CD8-positive, alpha-beta memory T cell (primary cell): ENCODE measurements at regions of chr1 and their contacts with region 1.

Region 1: GRCh38 chr1:42721926-42722325 is 18.1 kb downstream of the CLDN19 start:
- DNase-seq: no peak
- H3K4me3 ChIP-seq: no peak overlapping the region
- H3K4me3 Mint-ChIP-seq: no peak overlapping the region
- H3K27ac ChIP-seq: no peak overlapping the region
- H3K27ac Mint-ChIP-seq: no peak overlapping the region
- H3K4me1 ChIP-seq: no peaks in the 10 kb centered on the region
- H3K4me1 Mint-ChIP-seq: no peaks in the 10 kb centered on the region
- H3K27me3 ChIP-seq: no peaks in the 10 kb centered on the region
- H3K27me3 Mint-ChIP-seq: no peaks in the 10 kb centered on the region

Region 2: GRCh38 chr1:41650028-41650880 is 1071.7 kb before region 1 on chr1:
- CTCF ChIA-PET with region 1: no interaction called
- POLR2A ChIA-PET with region 1: interaction called, 10 read pairs
- DNase-seq: peak in 1 of 5 donors; percentile 16
- H3K4me3 ChIP-seq: no peak overlapping the region
- H3K4me3 Mint-ChIP-seq: peak overlapping the region in 3 of 7 donors; percentile 17 to 68 (median 48)
- H3K27ac ChIP-seq: no peak overlapping the region
- H3K27ac Mint-ChIP-seq: peak overlapping the region in 5 of 8 donors; percentile 12 to 78 (median 45)
- H3K4me1 ChIP-seq: peaks cover 13% of the 10 kb centered on the region
- H3K4me1 Mint-ChIP-seq: peaks cover 22 to 41% (median 33%) of the 10 kb centered on the region in 3 donors
- H3K27me3 ChIP-seq: no peaks in the 10 kb centered on the region
- H3K27me3 Mint-ChIP-seq: no peaks in the 10 kb centered on the region

Region 3: DNA sequence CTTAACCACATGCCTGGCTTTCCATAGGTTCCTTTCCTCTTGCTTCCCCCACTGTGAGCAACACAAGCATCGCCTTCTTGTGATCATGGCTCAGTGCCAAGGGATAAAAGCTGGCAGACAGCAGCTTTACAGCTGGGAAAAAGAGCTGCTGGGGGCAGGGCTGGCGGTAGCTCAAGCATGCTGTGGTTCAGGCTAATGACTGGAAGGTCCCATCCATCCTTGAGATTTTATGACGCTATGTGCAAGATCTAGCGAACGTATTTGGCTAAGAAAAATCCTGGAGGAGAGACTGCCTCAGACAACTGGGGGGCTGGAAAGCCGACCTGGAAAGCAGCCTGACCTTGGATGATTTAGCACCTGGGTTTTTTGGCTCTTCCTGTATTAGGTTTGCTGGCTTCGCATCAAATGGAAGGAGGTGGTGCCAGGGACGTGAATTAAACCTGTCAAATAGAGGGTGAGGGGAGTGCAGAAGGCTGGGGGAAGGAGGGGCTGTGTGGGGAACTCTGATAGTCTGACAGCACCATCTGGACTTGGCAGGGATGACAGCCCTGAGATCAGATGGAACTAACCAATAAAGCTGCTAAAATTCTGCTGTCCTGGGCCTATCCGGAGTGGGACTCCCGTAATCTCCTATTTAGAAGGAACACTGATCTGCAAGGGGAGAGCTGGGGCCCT is 300.9 kb before region 1 on chr1:
- CTCF ChIA-PET with region 1: no interaction called
- POLR2A ChIA-PET with region 1: no interaction called
- DNase-seq: no peak
- H3K4me3 ChIP-seq: no peak overlapping the region
- H3K4me3 Mint-ChIP-seq: no peak overlapping the region
- H3K27ac ChIP-seq: no peak overlapping the region
- H3K27ac Mint-ChIP-seq: peak overlapping the region in 1 of 8 donors; percentile 96
- H3K4me1 ChIP-seq: no peaks in the 10 kb centered on the region
- H3K4me1 Mint-ChIP-seq: no peaks in the 10 kb centered on the region
- H3K27me3 ChIP-seq: no peaks in the 10 kb centered on the region
- H3K27me3 Mint-ChIP-seq: peaks cover 10 to 37% of the 10 kb centered on the region in 2 donors

Region 4: GRCh38 chr1:42618866-42619265 is 103.1 kb before region 1 on chr1:
- CTCF ChIA-PET with region 1: no interaction called
- POLR2A ChIA-PET with region 1: no interaction called
- DNase-seq: no peak
- H3K4me3 ChIP-seq: no peak overlapping the region
- H3K4me3 Mint-ChIP-seq: no peak overlapping the region
- H3K27ac ChIP-seq: no peak overlapping the region
- H3K27ac Mint-ChIP-seq: no peak overlapping the region
- H3K4me1 ChIP-seq: no peaks in the 10 kb centered on the region
- H3K4me1 Mint-ChIP-seq: no peaks in the 10 kb centered on the region
- H3K27me3 ChIP-seq: no peaks in the 10 kb centered on the region
- H3K27me3 Mint-ChIP-seq: no peaks in the 10 kb centered on the region

Region 5: DNA sequence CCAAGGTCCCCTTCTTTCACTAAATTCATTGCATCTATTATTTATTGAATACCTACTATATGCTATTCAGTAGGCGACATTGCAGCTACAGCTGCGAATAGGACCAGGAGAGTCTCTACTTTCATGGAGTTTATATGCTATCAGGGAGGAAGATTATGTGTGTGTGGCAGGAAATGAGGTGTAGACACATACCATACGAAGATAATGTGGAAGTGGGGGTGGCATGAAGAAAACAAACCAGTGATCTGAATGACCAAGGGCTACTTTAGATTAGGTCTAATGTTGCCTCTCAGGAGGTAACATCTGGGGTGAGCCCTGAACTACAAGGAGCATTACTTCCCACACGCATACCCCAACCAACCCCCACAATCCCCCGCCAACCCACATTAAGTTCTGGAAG is 64.7 kb before region 1 on chr1:
- CTCF ChIA-PET with region 1: no interaction called
- POLR2A ChIA-PET with region 1: no interaction called
- DNase-seq: no peak
- H3K4me3 ChIP-seq: peak overlapping the region; percentile 92
- H3K4me3 Mint-ChIP-seq: peak overlapping the region; percentile 93 to 99 (median 98)
- H3K27ac ChIP-seq: peak overlapping the region; percentile 81
- H3K27ac Mint-ChIP-seq: peak overlapping the region; percentile 88 to 98 (median 95)
- H3K4me1 ChIP-seq: peaks cover 22% of the 10 kb centered on the region
- H3K4me1 Mint-ChIP-seq: peaks cover 35 to 47% (median 46%) of the 10 kb centered on the region in 3 donors
- H3K27me3 ChIP-seq: no peaks in the 10 kb centered on the region
- H3K27me3 Mint-ChIP-seq: no peaks in the 10 kb centered on the region